ENCODE measurements at regions of chr21 and their contacts with region 1.

Region 1: GRCh38 chr21:37366482-37367316 is at the start of gene DYRK1A:
- DNase-seq: peak; percentile 99
- H3K4me3 Mint-ChIP-seq: peak within 1 kb of the TSS; percentile 98
- H3K27ac Mint-ChIP-seq: peak within 1 kb of the TSS; percentile 99
- H3K4me1 Mint-ChIP-seq: peaks cover 34% of the 10 kb centered on the region
- H3K27me3 Mint-ChIP-seq: no peaks in the 10 kb centered on the region
- total RNA-seq, gene DYRK1A: 47.6 to 51.1 TPM

Region 2: DNA sequence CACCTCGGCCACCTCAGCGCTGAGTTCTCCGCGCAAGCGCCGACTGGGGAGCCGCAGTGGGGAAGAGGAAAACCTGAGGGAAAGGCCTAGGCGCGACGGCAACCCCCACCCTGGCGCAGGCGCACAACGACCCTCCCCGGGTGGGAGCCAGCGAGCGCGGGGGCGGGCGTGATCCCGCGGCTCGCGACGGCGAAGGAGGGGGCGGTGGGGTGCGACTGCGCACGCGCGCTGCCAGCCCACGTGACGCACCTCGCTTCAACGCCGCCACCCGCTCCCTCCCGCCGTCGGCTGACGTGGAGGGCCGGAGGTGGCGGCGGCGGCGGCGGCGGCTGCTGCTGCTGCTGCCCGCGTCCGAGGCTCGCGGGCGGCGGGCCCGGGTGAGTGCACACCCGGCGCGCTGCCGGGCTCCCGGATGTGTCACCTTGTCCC is 293.7 kb before region 1 on chr21 and contains the starts of genes PIGP and TTC3:
- CTCF ChIA-PET with region 1: no interaction called
- POLR2A ChIA-PET with region 1: no interaction called
- intact Hi-C with region 1: loop called (anchors 1 kb)
- DNase-seq: peak; percentile 97
- H3K4me3 Mint-ChIP-seq: peak within 1 kb of the TSS; percentile 99
- H3K27ac Mint-ChIP-seq: peak within 1 kb of the TSS; percentile 89
- H3K4me1 Mint-ChIP-seq: peaks cover 50% of the 10 kb centered on the region
- H3K27me3 Mint-ChIP-seq: no peaks in the 10 kb centered on the region
- total RNA-seq, gene PIGP: 19.2 to 21.2 TPM
- total RNA-seq, gene TTC3: 63.1 to 65.6 TPM

Region 3: DNA sequence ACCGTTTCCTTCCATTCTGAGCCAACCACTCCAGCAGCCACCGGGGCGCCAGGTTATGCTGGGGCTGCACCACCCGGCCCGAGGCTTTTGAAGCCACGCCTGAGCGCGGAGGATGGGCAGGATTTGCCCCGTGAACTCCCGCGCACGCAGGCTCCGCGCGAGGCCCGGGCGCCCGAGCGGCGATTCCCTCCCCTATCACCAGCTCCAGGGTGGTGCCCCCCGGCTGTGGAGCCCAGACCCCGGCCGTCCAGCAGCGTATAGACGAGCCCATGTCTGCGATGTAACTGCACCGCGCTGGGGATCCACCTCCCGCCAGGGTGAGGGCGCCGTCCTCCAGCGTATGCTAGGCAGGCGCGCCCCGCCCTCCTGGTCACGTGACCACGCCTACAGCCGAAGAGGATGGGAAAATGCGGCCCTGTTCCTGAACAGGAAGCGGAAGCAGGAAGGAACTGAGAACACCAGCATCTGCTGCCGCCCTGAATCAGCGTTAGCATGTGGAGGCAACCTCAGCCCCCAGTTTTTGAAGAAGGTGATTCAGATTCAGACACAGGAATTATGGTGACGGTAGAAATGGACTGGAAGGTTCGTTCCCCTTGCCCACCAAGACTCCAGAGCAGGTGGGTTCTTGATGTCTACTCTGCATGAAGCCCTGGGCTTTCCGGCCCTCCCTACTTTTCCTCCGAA is 145.6 kb before region 1 on chr21:
- CTCF ChIA-PET with region 1: interaction called, 3 read pairs
- POLR2A ChIA-PET with region 1: interaction called, 8 read pairs
- intact Hi-C with region 1: loop called (anchors 1 kb)
- DNase-seq: peak; percentile 97
- H3K4me3 Mint-ChIP-seq: peak overlapping the region; percentile 86
- H3K27ac Mint-ChIP-seq: peak overlapping the region; percentile 96
- H3K4me1 Mint-ChIP-seq: peaks cover 36% of the 10 kb centered on the region
- H3K27me3 Mint-ChIP-seq: no peaks in the 10 kb centered on the region

Region 4: GRCh38 chr21:37407719-37408420 is 41.2 kb after region 1 on chr21:
- CTCF ChIA-PET with region 1: interaction called, 11 read pairs
- POLR2A ChIA-PET with region 1: interaction called, 17 read pairs
- intact Hi-C with region 1: loop called (anchors 1 kb)
- DNase-seq: no peak
- H3K4me3 Mint-ChIP-seq: peak overlapping the region; percentile 22
- H3K27ac Mint-ChIP-seq: peak overlapping the region; percentile 73
- H3K4me1 Mint-ChIP-seq: peaks cover 84% of the 10 kb centered on the region
- H3K27me3 Mint-ChIP-seq: no peaks in the 10 kb centered on the region

Region 5: DNA sequence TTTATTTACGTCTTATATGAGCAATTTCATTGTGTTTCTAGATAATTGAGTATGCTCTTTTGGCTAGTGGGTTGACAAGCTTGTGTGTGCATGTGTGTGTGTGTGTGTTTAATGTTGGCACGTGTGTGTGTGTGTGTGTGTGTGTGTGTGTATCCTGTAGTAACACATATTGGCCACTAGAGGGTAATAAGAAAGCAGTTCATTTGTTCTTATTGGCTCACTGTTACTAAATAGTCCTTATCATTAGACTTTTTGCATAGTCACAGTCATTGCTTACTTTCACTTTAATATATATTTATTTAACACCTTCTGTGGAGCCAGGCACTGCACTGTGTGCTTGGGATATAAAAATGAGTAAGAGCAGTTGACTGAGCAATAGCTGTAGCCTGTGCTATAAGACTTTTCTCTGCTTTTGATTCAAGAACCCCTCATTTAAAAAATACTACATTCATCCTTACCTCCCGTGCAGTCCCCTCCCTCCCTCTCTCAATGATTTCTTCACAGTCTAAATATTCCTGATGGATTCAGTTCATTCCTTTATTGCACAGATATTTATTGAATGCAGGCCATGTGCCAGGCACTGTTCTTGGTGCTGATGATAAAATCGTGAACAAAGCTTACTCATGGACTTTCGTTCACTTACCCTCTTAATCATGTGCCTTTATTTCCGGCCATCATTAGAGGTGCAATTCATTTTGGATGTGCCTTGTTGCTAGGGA is 96.5 kb after region 1 on chr21:
- CTCF ChIA-PET with region 1: interaction called, 5 read pairs
- POLR2A ChIA-PET with region 1: interaction called, 3 read pairs
- intact Hi-C with region 1: loop called (anchors 2 kb)
- DNase-seq: peak; percentile 25
- H3K4me3 Mint-ChIP-seq: no peak overlapping the region
- H3K27ac Mint-ChIP-seq: no peak overlapping the region
- H3K4me1 Mint-ChIP-seq: peaks cover 70% of the 10 kb centered on the region
- H3K27me3 Mint-ChIP-seq: no peaks in the 10 kb centered on the region